GM23248 (cell line): ENCODE measurements at regions of chr17 and their contacts with region 1.

Region 1: GRCh38 chr17:2828397-2829038 is 32.3 kb downstream of the RAP1GAP2 start:
- DNase-seq: peak; percentile 61
- H3K4me3 ChIP-seq: no peak overlapping the region
- H3K27ac ChIP-seq: no peak overlapping the region
- H3K4me1 ChIP-seq: no peaks in the 10 kb centered on the region
- H3K27me3 ChIP-seq: 0 out of 2 replicates have a peak, but pooled peaks cover 6% of the 10 kb centered on the region

Region 2: DNA sequence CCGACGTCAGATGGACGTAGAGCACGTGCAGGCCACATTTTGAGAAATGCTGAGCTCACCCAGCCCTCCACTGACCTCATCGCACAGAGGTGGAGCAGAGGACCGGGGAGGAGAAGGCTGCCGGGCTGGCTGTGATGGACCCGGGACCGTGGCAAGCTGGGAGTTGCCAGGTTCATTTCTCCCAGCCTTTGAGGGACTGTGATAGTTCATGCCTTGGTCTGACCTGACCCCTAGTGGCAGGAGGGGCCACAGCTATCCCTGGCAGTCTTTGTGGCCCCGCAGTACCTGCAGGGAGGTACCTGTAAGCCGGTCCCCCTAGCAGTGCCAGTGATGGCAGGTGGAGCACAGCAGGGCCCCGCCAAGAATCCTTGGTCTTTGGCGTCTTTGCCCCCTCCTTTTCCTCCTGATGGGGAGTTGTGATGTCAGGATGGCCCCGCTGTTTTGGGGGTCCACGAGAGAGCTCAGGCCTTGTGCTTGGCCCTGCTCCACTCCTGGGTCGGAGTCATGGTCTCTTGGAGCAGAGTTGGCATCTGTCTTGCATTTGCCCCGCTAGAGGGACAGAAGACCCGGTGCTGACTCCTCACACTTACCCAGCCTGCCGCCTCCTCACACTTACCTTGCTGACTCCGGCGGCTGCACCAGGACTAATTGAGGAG is 184.5 kb after region 1 on chr17:
- in situ Hi-C with region 1: loop called (anchors 10 kb)
- DNase-seq: peak; percentile 74
- H3K4me3 ChIP-seq: no peak overlapping the region
- H3K27ac ChIP-seq: no peak overlapping the region
- H3K4me1 ChIP-seq: no peaks in the 10 kb centered on the region
- H3K27me3 ChIP-seq: no peaks in the 10 kb centered on the region